Left ventricle myocardium superior (tissue), 1 donor: ENCODE measurements at regions of chr1 and their contacts with region 1.

Region 1: GRCh38 chr1:230917284-230918135 is 49.2 kb upstream of the C1orf198 start:
- DNase-seq: peak; percentile 76
- ATAC-seq: peak; percentile 94

Region 2: GRCh38 chr1:230495891-230496385 is 421.6 kb before region 1 on chr1:
- intact Hi-C with region 1: no loop called
- DNase-seq: no peak
- ATAC-seq: no peak

Region 3: GRCh38 chr1:230797942-230798418 is 119.5 kb before region 1 on chr1:
- intact Hi-C with region 1: loop called (anchors 1 kb)
- DNase-seq: peak; percentile 59
- ATAC-seq: peak; percentile 94

Region 4: DNA sequence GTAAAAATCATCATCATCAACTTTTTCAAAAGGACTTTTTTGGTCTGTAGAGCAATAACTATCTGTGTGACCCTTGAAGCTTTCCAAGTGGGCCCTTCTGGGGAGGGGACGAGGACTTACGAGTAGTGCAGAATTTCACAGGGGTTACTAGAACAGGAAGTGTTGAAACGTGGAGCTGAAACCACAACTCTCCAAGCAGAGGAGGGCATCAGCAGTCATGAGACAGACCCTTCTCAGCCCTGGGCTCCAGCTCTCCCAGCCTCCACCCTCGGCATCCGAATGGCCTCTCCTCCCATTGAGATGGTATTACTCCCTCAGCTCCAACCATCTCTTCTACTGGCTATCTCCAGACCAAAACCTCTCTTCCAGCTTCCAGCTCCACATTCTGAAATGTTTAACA is 118.9 kb after region 1 on chr1:
- intact Hi-C with region 1: no loop called
- DNase-seq: no peak
- ATAC-seq: no peak

Region 5: DNA sequence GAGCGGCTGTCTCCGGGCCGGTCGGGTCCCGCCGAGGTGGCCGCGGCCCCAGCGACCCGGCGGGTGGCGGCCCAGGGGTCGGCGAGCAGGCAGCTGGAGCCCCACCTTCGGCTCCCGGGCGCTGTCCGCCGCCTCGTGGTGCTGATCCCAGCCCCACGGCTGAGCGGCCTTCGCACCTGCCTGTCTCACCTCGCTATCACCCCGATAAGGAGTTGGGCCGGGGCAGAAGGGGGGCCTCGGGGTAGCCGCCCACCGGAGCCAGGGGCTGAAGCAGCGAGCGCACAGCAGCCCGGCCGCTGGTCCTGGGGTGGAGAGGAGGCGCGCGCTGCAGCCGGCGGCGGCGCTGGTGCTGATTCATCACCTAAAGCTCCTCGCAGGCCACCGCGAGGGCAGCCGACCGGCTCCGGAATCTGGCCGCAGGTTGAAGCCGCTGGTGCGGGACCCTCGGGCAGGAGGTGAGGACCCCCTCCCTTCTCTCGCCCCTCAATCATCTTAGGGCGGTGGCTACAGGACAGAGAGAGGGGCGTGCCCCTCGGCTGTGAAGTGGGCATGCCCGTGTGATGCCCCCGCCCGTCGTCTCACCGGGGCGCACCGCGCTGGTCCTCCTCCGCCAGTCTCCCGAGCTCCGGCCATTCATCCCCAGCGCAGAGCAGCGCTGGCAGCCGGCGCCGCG is 244.9 kb after region 1 on chr1:
- intact Hi-C with region 1: no loop called
- DNase-seq: peak; percentile 64
- ATAC-seq: peak; percentile 91

Region 6: DNA sequence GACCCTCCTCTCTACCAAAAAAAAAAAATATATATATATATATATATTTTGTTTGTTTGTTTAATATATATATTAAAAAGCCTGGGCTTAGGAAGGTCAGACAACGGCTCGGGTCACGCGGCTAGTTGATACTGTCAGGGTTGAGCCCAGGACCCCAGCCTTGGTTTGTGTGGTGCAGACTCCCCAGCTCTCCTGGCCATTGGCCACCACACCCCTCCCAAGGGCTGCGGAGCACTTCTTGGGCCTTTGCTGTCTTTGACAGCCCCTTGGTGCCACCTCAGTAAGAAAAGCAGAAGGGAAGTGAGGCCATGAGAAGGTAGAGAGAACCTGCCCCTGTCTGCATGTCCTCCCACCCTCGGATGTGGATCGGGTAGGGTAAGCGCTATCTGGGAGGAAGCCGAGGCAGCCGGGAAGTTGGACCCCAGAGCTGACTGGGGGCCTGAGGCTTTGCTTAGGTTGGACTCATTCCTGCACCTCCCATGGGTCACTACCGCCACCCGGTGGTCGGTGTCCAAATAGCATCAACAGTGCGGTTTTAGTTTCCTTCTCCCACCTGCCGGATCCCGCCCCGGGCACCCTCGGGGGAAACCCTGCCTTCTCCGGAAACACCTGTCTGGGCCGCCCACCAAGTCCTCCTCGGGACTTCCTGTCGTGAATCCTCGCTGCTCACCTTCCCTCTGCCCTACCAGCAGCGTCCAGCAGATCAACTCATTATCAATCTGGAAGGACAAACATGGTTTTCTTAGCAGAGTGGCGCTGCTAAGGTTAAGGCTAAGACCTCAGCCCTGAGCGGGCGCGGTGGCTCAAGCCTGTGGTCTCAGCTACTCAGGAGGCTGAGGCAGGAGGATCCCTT is 293.7 kb after region 1 on chr1:
- intact Hi-C with region 1: loop called (anchors 10 kb)
- DNase-seq: peak; percentile 81
- ATAC-seq: peak; percentile 85

Region 7: GRCh38 chr1:231467986-231468385 is 550.5 kb after region 1 on chr1:
- intact Hi-C with region 1: no loop called
- DNase-seq: no peak
- ATAC-seq: no peak